MCF 10A (cell line): ENCODE measurements at regions of chr12 and their contacts with region 1.

Region 1: GRCh38 chr12:3777206-3777809 is 24.4 kb upstream of the CRACR2A start:
- DNase-seq: peak; percentile 58
- H3K4me3 Mint-ChIP-seq: no peak overlapping the region
- H3K27ac Mint-ChIP-seq: no peak overlapping the region
- H3K4me1 Mint-ChIP-seq: no peaks in the 10 kb centered on the region
- H3K27me3 Mint-ChIP-seq: no peaks in the 10 kb centered on the region
- CTCF ChIP-seq: peak; percentile 64

Region 2: DNA sequence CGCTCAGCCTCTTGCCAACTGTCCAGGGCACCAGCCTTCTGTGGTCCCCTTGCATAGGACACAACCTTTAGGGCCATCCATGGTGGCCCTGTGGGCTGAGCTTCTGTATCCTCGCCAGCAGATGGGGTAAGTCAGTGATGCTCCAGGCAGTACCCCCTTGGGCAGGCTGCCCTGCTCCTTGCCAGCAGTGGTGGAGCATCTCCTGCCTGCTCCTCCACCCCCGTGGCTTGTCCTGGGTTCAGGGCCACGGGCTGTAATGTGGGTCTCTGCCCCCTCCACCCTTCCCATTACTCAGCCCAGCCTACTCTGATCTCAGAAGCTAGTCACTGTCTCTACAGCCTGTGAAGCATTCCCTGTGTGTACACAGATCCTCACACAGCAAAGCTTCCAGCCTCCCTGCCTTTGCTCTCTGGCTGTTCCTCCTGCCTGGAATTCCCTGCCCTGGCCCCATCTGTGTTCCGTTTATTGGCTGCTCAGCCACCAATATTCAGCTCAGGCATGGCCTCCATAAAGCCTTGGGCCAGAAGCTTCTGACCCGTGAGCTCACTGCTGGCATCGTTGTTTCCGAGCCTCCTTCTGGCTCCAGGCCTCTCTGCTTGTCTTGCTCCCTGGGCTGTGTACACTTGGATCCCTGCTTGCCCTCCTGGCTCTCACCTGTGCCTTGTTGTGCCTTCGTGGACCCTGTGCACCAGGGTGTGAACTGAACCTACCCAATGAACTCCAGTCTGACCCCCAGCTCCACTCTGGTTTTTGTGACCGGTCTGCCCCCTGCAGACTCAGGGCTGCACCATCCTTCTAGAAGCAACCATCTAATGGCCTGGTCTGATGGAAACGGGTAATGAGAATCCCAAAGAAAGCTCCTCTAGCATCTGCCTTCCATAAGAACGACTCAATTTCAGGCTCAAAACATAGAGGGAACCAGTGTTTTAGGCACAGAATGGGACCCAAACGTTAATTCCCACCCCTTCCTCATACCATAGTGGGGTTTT is 463.3 kb before region 1 on chr12:
- CTCF ChIA-PET with region 1: interaction called, 16 read pairs
- POLR2A ChIA-PET with region 1: no interaction called
- intact Hi-C with region 1: no loop called
- DNase-seq: no peak
- H3K4me3 Mint-ChIP-seq: no peak overlapping the region
- H3K27ac Mint-ChIP-seq: no peak overlapping the region
- H3K4me1 Mint-ChIP-seq: peaks cover 51% of the 10 kb centered on the region
- H3K27me3 Mint-ChIP-seq: no peaks in the 10 kb centered on the region
- CTCF ChIP-seq: peak; percentile 35

Region 3: DNA sequence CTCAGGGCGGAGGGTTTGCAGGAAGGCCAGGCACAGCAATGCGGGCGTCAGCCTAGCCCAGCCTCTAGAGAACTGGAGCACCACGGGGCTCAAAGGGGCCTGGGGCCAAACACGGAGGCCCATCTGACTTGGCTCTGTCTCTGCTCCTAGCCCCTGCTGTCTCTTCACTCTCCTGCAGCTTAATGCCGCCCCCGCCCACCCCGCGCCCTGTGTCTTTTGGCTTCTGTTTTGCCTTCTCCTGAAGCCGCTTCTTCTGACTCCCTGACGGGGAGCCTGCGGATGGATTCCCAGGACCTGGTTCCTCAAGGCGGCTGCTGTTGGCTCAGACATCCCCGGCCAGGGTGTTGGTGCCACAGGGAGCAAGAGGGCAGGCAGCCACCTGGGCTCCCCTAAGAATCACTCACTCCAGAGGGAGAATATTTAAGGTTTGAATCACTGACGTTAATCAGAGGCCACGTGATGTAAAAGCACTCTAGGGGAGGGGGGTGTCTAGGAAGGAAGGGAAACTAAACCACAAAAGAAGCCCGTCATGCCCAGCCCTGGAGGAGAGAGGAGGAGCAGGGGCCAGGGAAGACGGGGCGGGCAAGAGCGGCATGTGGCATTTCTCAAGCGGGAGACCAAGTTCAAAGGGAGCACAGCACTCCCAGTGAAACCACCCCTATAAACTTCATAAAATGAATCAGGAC is 323.2 kb before region 1 on chr12:
- CTCF ChIA-PET with region 1: no interaction called
- POLR2A ChIA-PET with region 1: no interaction called
- intact Hi-C with region 1: loop called (anchors 10 kb)
- DNase-seq: peak; percentile 98
- H3K4me3 Mint-ChIP-seq: peak overlapping the region; percentile 67
- H3K27ac Mint-ChIP-seq: peak overlapping the region; percentile 89
- H3K4me1 Mint-ChIP-seq: peaks cover 33% of the 10 kb centered on the region
- H3K27me3 Mint-ChIP-seq: no peaks in the 10 kb centered on the region
- CTCF ChIP-seq: no peak

Region 4: GRCh38 chr12:3520168-3520567 is 257.1 kb before region 1 on chr12:
- CTCF ChIA-PET with region 1: interaction called, 3 read pairs
- POLR2A ChIA-PET with region 1: interaction called, 3 read pairs
- intact Hi-C with region 1: loop called (anchors 1 kb)
- DNase-seq: peak; percentile 41
- H3K4me3 Mint-ChIP-seq: no peak overlapping the region
- H3K27ac Mint-ChIP-seq: no peak overlapping the region
- H3K4me1 Mint-ChIP-seq: peaks cover 9% of the 10 kb centered on the region
- H3K27me3 Mint-ChIP-seq: no peaks in the 10 kb centered on the region
- CTCF ChIP-seq: no peak

Region 5: GRCh38 chr12:3655328-3655900 is 121.9 kb before region 1 on chr12:
- CTCF ChIA-PET with region 1: interaction called, 5 read pairs
- POLR2A ChIA-PET with region 1: no interaction called
- intact Hi-C with region 1: loop called (anchors 2 kb)
- DNase-seq: peak; percentile 27
- H3K4me3 Mint-ChIP-seq: no peak overlapping the region
- H3K27ac Mint-ChIP-seq: no peak overlapping the region
- H3K4me1 Mint-ChIP-seq: peaks cover 5% of the 10 kb centered on the region
- H3K27me3 Mint-ChIP-seq: no peaks in the 10 kb centered on the region
- CTCF ChIP-seq: no peak

Region 6: GRCh38 chr12:3789838-3790237 is 12.5 kb after region 1 on chr12:
- CTCF ChIA-PET with region 1: interaction called, 25 read pairs
- POLR2A ChIA-PET with region 1: no interaction called
- intact Hi-C with region 1: no loop called
- DNase-seq: no peak
- H3K4me3 Mint-ChIP-seq: no peak overlapping the region
- H3K27ac Mint-ChIP-seq: no peak overlapping the region
- H3K4me1 Mint-ChIP-seq: no peaks in the 10 kb centered on the region
- H3K27me3 Mint-ChIP-seq: no peaks in the 10 kb centered on the region
- CTCF ChIP-seq: no peak

Region 7: DNA sequence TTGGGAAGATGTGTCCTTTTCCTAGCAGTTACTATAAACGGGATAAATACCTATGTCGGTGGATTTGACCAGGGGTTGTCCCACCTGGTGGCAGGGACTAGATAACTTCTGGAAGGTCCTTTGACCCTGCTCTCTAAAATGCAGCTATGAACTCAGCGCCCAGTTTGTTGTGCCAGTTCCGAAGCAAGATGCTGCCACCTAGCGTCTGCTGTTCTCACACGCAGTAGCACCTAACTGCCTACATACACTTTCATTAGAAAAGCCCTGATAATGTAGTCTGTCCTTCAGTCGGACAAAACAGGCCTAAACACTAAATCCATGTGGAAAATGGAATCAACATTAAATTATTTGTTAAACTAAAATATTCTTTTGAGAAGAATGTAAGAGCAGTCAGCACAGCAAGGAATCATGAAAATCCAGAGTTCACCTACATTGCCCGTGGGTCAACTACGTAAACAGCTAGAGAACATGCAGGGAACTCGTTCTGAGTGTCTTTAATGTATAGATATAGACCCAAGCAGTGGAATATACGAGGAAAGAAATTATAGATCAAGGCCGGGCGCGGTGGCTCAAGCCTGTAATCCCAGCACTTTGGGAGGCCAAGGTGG is 26.7 kb after region 1 on chr12:
- CTCF ChIA-PET with region 1: interaction called, 15 read pairs
- POLR2A ChIA-PET with region 1: interaction called, 3 read pairs
- intact Hi-C with region 1: loop called (anchors 1 kb)
- DNase-seq: peak; percentile 68
- H3K4me3 Mint-ChIP-seq: no peak overlapping the region
- H3K27ac Mint-ChIP-seq: no peak overlapping the region
- H3K4me1 Mint-ChIP-seq: no peaks in the 10 kb centered on the region
- H3K27me3 Mint-ChIP-seq: no peaks in the 10 kb centered on the region
- CTCF ChIP-seq: peak; percentile 71

Region 8: DNA sequence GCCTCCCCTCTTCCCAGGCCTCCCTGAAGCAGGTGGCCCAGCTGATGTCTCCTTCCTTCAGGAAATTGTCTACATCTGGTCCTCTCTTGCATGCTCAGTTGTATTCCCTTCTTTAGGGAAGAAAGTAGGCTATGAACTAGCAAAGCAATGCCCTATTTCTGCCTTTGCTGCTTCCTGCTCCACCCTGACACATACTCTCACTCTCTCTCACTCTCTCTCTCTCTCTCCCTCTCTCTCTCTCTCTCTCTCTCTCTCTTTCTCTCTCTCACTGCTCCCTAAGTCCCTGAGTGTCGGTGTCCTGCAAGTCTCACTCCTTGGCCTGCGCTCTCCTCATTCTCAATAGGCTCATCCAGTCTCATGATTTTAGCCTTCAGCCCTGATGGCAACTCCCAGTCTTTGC is 115.3 kb after region 1 on chr12:
- CTCF ChIA-PET with region 1: no interaction called
- POLR2A ChIA-PET with region 1: no interaction called
- intact Hi-C with region 1: no loop called
- DNase-seq: no peak
- H3K4me3 Mint-ChIP-seq: no peak overlapping the region
- H3K27ac Mint-ChIP-seq: no peak overlapping the region
- H3K4me1 Mint-ChIP-seq: peaks cover 8% of the 10 kb centered on the region
- H3K27me3 Mint-ChIP-seq: no peaks in the 10 kb centered on the region
- CTCF ChIP-seq: no peak